T-cell (primary cell): ENCODE measurements at regions of chr16 and their contacts with region 1.

Region 1: GRCh38 chr16:3884398-3884797 is 3.9 kb upstream of the CREBBP start:
- DNase-seq: no peak
- ATAC-seq: no peak
- H3K4me3 ChIP-seq: no peak overlapping the region
- H3K4me3 Mint-ChIP-seq: no peak overlapping the region
- H3K27ac ChIP-seq: no peak overlapping the region
- H3K27ac Mint-ChIP-seq: no peak overlapping the region
- H3K4me1 ChIP-seq: peaks cover under 1 to 10% of the 10 kb centered on the region in 2 experiments
- H3K4me1 Mint-ChIP-seq: peaks cover 3 to 10% (median 9%) of the 10 kb centered on the region in 3 donors
- H3K27me3 ChIP-seq: peaks cover 0 to 20% of the 10 kb centered on the region in 2 experiments
- H3K27me3 Mint-ChIP-seq: peaks cover 0 to 4% of the 10 kb centered on the region in 2 donors

Region 2: GRCh38 chr16:3850544-3850899 is 33.9 kb before region 1 on chr16:
- CTCF ChIA-PET with region 1: interaction called in 1 of 2 experiments, 11 read pairs
- POLR2A ChIA-PET with region 1: no interaction called
- DNase-seq: no peak
- ATAC-seq: no peak
- H3K4me3 ChIP-seq: no peak overlapping the region
- H3K4me3 Mint-ChIP-seq: no peak overlapping the region
- H3K27ac ChIP-seq: no peak overlapping the region
- H3K27ac Mint-ChIP-seq: no peak overlapping the region
- H3K4me1 ChIP-seq: peaks cover 7 to 28% of the 10 kb centered on the region in 2 experiments
- H3K4me1 Mint-ChIP-seq: peaks cover 61 to 69% (median 69%) of the 10 kb centered on the region in 3 donors
- H3K27me3 ChIP-seq: no peaks in the 10 kb centered on the region
- H3K27me3 Mint-ChIP-seq: no peaks in the 10 kb centered on the region

Region 3: GRCh38 chr16:3945751-3946603 is 61.6 kb after region 1 on chr16:
- CTCF ChIA-PET with region 1: no interaction called
- POLR2A ChIA-PET with region 1: no interaction called
- DNase-seq: no peak
- ATAC-seq: no peak
- H3K4me3 ChIP-seq: no peak overlapping the region
- H3K4me3 Mint-ChIP-seq: no peak overlapping the region
- H3K27ac ChIP-seq: no peak overlapping the region
- H3K27ac Mint-ChIP-seq: no peak overlapping the region
- H3K4me1 ChIP-seq: no peaks in the 10 kb centered on the region
- H3K4me1 Mint-ChIP-seq: no peaks in the 10 kb centered on the region
- H3K27me3 ChIP-seq: peaks cover 0 to 8% of the 10 kb centered on the region in 2 experiments
- H3K27me3 Mint-ChIP-seq: peaks cover 0 to 12% of the 10 kb centered on the region in 2 donors